ENCODE measurements at regions of chr20 and their contacts with region 1.

Region 1: DNA sequence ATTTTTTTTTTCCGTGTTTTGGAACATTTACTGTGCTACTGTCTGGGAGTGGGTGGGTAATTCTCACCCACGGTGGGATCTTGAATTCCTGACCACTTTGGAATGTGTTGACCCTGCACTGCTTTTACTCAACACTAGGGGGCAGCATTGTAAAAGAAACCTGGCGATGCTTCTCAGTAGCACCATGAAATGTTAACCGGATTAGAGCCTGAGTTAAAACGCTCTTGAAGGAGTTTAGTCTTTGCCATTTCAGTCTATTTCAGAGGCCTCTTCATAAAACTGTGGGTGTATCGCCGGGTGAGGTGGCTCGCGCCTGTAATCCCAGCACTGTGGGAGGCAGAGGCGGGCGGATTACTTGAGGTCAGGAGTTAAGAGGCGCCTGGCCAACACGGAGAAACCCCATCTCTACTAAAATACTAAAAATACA is 114.4 kb upstream of the PRND start:
- DNase-seq: peak; percentile 31
- ATAC-seq: peak; percentile 93
- H3K4me3 Mint-ChIP-seq: no peak overlapping the region
- H3K27ac Mint-ChIP-seq: peak overlapping the region; percentile 13
- H3K4me1 Mint-ChIP-seq: peaks cover 9% of the 10 kb centered on the region
- H3K27me3 Mint-ChIP-seq: peaks cover 3% of the 10 kb centered on the region
- CTCF ChIP-seq: peak; percentile 96

Region 2: DNA sequence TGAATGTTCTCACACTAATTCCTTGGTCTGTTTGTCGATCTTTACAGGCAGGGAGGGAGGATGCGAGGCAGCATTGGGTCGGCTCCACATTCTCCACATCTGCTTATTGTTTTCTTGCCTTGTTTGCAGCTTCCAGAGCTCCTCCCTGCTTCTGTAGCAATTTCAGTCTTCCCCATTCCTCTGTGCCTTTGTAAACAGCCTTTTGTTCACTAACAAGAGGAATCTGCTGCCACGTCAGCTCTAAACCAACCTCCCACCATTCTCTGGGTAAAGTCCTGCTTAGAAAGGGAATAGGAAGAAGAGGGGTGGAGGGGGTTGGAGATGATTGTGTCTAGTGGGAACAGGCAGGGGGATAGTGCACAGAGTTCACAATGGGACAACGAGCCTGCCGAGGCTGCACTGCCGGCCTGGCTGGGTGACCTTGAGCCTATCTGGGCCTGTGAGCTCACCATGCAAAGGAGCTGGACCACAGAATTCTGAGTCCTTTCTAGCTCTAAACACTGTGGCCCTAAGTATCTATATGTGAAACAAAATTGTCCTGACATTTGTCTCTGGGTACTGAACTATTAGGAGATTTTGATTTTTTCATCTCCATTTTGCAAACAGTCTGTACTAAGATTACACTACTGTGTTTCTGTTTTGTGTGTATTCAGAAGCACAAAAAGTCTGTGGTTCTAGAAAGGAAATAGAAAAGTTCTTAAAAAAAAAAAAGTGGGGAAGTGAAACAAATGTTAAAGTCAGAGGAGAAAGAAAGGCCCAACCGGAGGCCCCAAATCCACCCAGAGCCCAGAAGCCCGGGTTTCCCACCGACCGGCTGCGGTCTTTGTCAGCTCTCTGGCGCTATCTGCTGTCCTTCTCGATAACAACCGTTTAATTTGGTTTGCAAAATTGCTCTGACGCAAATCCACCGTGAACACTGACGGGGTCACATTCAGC is 113.0 kb after region 1 on chr20:
- CTCF ChIA-PET with region 1: interaction called, 7 read pairs
- POLR2A ChIA-PET with region 1: interaction called, 5 read pairs
- intact Hi-C with region 1: loop called (anchors 1 kb)
- DNase-seq: peak; percentile 64
- ATAC-seq: peak; percentile 97
- H3K4me3 Mint-ChIP-seq: peak overlapping the region; percentile 55
- H3K27ac Mint-ChIP-seq: peak overlapping the region; percentile 85
- H3K4me1 Mint-ChIP-seq: peaks cover 44% of the 10 kb centered on the region
- H3K27me3 Mint-ChIP-seq: no peaks in the 10 kb centered on the region
- CTCF ChIP-seq: peak; percentile 47

Region 3: DNA sequence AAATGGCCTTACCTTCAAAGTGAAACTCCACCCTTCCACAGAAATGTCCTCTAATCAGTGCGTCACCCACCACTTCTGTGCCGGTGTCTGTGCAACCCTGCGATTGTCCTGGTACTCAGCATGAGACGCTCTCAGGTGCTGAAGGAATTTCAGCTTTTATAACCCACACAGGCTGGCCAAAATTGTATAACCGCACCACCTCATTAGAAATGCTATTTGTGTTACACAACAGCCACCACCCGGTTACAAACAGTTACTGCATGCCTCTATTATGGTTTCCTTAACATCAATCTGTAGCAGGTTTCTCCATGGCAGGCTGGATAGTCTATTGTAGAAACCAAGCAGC is 342.5 kb after region 1 on chr20:
- CTCF ChIA-PET with region 1: no interaction called
- POLR2A ChIA-PET with region 1: no interaction called
- intact Hi-C with region 1: loop called (anchors 2 kb)
- DNase-seq: no peak
- ATAC-seq: peak; percentile 53
- H3K4me3 Mint-ChIP-seq: peak overlapping the region; percentile 76
- H3K27ac Mint-ChIP-seq: peak overlapping the region; percentile 70
- H3K4me1 Mint-ChIP-seq: peaks cover 63% of the 10 kb centered on the region
- H3K27me3 Mint-ChIP-seq: no peaks in the 10 kb centered on the region
- CTCF ChIP-seq: no peak

Region 4: DNA sequence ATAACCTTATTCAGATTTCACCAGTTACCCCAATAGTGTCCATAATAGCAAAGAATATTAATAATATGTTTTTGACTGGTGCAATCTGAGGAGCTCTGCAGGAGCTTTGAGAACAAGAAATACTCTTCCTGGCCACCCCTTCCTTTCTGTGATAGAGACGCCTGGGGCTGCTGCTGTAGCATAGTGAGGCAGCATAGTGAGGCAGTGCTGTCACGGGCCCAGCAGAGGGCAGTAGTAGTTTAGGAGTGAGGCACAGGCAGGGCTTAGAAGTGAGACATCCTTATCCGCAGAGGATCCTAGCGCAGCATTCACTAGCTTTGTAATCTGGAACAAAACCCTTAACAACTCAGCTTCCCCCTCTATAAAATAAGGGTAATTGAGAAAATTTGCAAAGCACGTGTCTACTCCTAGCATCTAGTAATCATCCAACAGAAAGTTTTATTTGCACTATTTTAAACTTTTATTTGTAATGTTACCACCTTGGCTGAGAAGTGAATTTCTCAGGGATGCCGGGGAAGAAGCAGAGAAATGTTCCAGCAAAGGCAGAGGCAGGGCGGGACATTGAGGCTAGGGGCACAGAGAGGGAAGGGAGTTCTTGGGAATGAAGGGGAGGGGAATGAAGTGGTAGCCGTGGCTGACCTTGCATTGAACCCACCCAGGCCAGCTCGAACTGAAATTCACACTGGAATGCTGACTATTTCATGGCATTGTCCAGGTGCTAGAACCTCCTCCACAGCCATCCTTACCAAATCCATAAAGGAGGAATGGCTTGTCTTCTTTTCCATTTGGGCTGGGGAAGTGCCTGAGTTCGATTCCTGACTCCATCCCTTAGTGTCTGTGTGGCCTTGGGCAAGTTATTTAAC is 598.3 kb after region 1 on chr20:
- CTCF ChIA-PET with region 1: no interaction called
- POLR2A ChIA-PET with region 1: no interaction called
- intact Hi-C with region 1: loop called (anchors 5 kb)
- DNase-seq: no peak
- ATAC-seq: peak; percentile 97
- H3K4me3 Mint-ChIP-seq: no peak overlapping the region
- H3K27ac Mint-ChIP-seq: no peak overlapping the region
- H3K4me1 Mint-ChIP-seq: no peaks in the 10 kb centered on the region
- H3K27me3 Mint-ChIP-seq: no peaks in the 10 kb centered on the region
- CTCF ChIP-seq: peak; percentile 79

Region 5: GRCh38 chr20:5222919-5223634 is 615.8 kb after region 1 on chr20:
- CTCF ChIA-PET with region 1: no interaction called
- POLR2A ChIA-PET with region 1: no interaction called
- intact Hi-C with region 1: loop called (anchors 1 kb)
- DNase-seq: no peak
- ATAC-seq: no peak
- H3K4me3 Mint-ChIP-seq: no peak overlapping the region
- H3K27ac Mint-ChIP-seq: no peak overlapping the region
- H3K4me1 Mint-ChIP-seq: no peaks in the 10 kb centered on the region
- H3K27me3 Mint-ChIP-seq: peaks cover 2% of the 10 kb centered on the region
- CTCF ChIP-seq: no peak

Measured in activated B cell treated with CpG ODN at 0.5 μM for 24 hours (primary cell).